ENCODE measurements at regions of chr6 and their contacts with region 1.

Region 1: DNA sequence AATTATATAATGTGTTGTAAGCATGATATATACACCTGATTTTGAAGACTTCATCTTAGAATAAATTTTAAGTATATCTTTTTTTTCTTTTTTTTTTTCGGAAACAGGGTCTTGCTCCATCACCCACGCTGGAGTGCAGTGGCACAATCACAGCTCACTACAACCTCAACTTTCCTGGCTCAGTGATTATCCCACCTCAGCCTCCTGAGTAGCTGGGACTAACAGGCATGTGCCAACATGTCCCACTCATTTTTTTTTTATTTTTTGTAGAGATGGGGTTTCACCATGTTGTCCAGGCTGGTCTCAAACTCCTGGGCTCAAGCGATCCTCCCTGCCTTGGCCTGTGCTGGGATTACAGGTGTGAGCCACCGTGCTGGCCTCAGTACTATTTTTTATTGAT is 17.1 kb downstream of the VPS52 start:
- DNase-seq: no peak
- H3K4me3 Mint-ChIP-seq: no peak overlapping the region
- H3K27ac Mint-ChIP-seq: no peak overlapping the region
- H3K4me1 Mint-ChIP-seq: peaks cover 12% of the 10 kb centered on the region
- H3K27me3 Mint-ChIP-seq: no peaks in the 10 kb centered on the region
- CTCF ChIP-seq: no peak

Region 2: DNA sequence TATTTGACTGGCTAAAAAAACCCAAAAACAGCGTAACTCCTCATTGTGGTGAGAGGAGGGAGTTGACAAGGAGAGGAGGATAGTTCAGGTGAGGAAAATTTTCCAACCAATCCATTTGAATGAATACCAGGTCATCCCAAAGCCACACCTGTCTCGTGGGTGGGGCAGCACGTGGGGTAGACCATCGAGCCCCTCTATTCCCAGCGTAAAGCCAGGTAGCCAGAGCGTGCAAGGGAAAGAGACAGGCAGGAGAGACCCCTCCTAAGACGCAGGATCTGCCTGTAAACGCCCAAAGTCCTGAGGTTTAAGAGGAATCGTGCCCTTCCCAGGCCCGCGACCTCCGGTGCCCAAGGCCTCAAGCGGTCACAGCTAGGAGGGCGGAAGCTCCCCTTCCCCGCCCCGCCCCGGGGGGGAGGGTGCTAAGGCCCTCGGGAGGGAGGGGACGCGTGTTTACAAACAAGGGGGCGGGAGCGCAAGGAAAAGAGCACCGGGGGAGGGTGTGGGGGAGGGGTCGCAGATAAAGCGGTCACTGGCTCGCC is 54.8 kb before region 1 on chr6:
- CTCF ChIA-PET with region 1: no interaction called
- intact Hi-C with region 1: no loop called
- DNase-seq: no peak
- H3K4me3 Mint-ChIP-seq: peak overlapping the region; percentile 97
- H3K27ac Mint-ChIP-seq: peak overlapping the region; percentile 97
- H3K4me1 Mint-ChIP-seq: peaks cover 57% of the 10 kb centered on the region
- H3K27me3 Mint-ChIP-seq: no peaks in the 10 kb centered on the region
- CTCF ChIP-seq: no peak

Region 3: DNA sequence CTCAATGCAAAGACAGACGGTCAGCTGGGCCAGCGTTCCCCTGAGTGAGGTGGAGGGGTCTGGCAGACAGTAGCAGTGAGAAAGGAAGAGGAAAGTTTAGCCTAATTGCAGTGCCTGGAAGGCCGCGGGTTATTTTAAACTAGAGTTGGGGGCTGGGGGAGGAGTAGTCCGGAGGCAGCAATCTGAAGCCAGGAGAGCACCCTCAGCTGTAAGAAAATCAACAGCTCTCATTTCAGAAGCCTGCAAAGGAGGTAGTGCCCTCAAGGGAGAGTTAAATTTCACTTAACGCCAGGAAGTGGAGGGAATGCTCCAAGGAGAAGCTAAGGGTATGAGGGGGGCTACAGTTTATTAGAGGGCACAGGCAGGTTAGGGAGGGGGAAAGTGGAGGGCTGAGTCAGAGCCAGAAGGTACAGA is 19.4 kb before region 1 on chr6:
- CTCF ChIA-PET with region 1: interaction called, 10 read pairs
- intact Hi-C with region 1: no loop called
- DNase-seq: no peak
- H3K4me3 Mint-ChIP-seq: no peak overlapping the region
- H3K27ac Mint-ChIP-seq: no peak overlapping the region
- H3K4me1 Mint-ChIP-seq: peaks cover 14% of the 10 kb centered on the region
- H3K27me3 Mint-ChIP-seq: peaks cover 86% of the 10 kb centered on the region
- CTCF ChIP-seq: no peak

Measured in Calu3 (cell line).